Heart right ventricle (tissue), 16 donors: ENCODE measurements at regions of chr6 and their contacts with region 1.

Region 1: DNA sequence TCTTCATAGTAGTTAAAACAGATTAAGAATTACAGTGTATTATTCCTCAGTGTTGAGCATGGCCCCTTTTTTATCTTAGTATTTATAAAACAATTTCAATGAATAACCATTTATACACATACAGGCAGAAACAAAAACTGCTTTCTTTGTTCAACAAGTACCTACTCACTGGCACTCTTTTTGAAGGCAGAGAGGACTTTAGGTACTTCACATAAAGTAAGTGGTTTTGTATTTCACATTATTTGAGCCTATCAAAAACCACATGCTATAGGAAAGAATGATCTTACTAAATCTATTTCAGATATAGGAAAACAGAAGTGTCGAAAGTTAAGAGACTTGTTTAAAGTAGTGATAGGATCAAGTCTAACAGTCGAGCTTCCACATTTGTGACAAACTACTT is 73.8 kb downstream of the PRKN start:
- DNase-seq: no peak
- ATAC-seq: no peak
- H3K4me3 ChIP-seq: no peak overlapping the region
- H3K27ac ChIP-seq: no peak overlapping the region
- H3K4me1 ChIP-seq: no peaks in the 10 kb centered on the region
- H3K27me3 ChIP-seq: no peaks in the 10 kb centered on the region
- CTCF ChIP-seq: no peak

Region 2: DNA sequence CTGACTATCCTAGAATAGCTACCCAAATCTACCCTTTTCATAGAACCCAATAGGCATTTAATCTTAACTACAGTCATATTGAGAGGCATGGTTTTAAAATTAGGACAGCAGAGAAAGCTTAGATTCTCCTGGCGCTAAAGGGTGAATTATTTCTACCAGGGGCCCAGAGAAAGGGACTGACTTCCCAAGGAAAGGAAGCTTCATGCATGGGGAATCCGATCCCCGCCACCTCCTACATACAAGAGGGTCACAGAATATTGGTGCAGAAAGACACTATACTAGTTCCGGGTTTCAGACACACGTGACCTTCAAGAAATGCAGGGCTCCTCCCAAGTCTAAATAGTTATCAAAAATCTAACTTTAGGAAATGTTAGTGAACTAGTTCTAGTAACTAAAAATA is 57.1 kb before region 1 on chr6:
- intact Hi-C with region 1: loop called in 1 of 10 experiments (anchors 2 kb)
- DNase-seq: no peak
- ATAC-seq: peak in 1 of 8 donors; percentile 39
- H3K4me3 ChIP-seq: peak overlapping the region in 1 of 10 donors; percentile 1
- H3K27ac ChIP-seq: no peak overlapping the region
- H3K4me1 ChIP-seq: peaks cover 0 to 17% (median 0%) of the 10 kb centered on the region in 9 donors
- H3K27me3 ChIP-seq: no peaks in the 10 kb centered on the region
- CTCF ChIP-seq: no peak